Tibial artery (tissue), 4 donors: ENCODE measurements at regions of chr21 and their contacts with region 1.

Region 1: GRCh38 chr21:16891821-16892220 is 621.0 kb upstream of the CXADR start:
- DNase-seq: no peak
- H3K4me3 ChIP-seq: no peak overlapping the region
- H3K27ac ChIP-seq: no peak overlapping the region
- H3K4me1 ChIP-seq: no peaks in the 10 kb centered on the region
- H3K27me3 ChIP-seq: no peaks in the 10 kb centered on the region
- CTCF ChIP-seq: no peak

Region 2: DNA sequence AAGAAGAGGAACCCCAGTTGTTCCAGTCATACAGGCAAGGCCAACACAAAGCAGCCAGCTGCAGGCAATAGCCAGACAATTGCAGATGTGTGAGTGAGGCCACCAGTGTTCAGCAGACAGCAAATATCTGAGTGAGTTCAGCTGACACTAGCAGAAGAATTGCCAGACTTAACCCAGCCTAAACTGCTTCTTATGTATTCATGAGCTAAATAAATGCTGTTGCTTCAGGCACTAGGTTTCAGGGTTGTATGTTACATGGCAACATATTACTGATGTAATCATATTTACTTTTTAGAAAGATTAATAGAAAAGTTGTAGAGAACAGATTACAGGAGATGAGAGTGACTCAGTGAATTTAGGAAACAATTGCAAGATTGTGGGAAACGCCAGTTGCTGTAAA is 1223.0 kb after region 1 on chr21:
- intact Hi-C with region 1: loop called (anchors 5 kb)
- DNase-seq: no peak
- H3K4me3 ChIP-seq: no peak overlapping the region
- H3K27ac ChIP-seq: no peak overlapping the region
- H3K4me1 ChIP-seq: no peaks in the 10 kb centered on the region
- H3K27me3 ChIP-seq: no peaks in the 10 kb centered on the region
- CTCF ChIP-seq: no peak